A549 (cell line): ENCODE measurements at regions of chr15 and their contacts with region 1.

Region 1: GRCh38 chr15:84929744-84930371 is 45.4 kb downstream of the SLC28A1 start:
- DNase-seq: peak; percentile 71 to 95
- ATAC-seq: peak; percentile 67 to 76
- H3K4me3 ChIP-seq: no peak overlapping the region
- H3K27ac ChIP-seq: peak overlapping the region; percentile 54 to 85
- H3K4me1 ChIP-seq: peaks cover 46% of the 10 kb centered on the region
- CTCF ChIP-seq: no peak
- EP300 ChIP-seq: no peak
- POLR2A ChIP-seq: no peak
- RAD21 ChIP-seq: no peak

Region 2: DNA sequence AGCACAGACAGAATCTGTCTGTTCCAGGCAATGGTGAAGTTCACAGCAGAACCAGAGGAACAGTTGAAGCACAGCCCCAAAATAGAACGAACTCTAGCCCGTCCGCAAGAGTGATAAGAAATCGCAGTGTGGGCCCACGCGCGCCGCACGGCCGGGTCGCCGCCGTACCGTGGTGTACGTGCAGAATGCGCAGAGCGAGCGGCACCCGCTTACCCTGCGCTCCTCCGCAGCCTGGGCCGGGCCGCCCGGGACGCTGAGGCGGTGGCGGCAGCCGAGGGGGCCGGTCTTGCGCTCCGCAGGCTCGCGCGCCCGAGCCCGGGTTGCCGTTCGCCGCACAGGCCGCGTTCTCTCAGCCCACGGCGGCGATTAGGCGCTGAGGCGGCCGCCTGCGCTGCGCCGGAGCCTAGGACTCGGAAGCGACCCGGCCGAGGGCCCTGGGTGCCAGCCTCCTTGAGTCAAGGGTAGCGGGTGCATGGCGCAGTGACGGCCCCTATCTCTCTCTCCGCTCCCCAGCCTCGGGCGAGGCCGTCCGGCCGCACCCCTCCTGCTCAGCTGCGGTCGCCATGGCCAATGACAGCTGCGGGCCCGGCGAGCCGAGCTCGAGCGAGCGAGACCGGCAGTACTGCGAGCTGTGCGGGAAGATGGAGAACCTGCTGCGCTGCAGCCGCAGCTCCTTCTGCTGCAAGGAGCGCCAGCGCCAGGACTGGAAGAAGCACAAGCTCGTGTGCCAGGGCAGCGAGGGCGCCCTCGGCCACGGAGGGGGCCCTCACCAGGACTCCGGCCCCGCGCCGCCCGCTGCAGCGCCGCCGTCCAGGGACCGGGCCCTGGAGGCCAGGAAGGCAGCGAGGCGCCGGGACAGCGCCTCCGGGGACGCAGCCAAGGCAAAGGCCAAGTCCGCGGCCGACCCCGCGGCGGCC is 296.3 kb before region 1 on chr15:
- CTCF ChIA-PET with region 1: interaction called, 12 read pairs
- POLR2A ChIA-PET with region 1: no interaction called
- DNase-seq: peak in 1 of 2 experiments; percentile 78
- ATAC-seq: peak; percentile 72 to 77
- H3K4me3 ChIP-seq: peak overlapping the region; percentile 51
- H3K27ac ChIP-seq: peak overlapping the region; percentile 63 to 87
- H3K4me1 ChIP-seq: peaks cover 24% of the 10 kb centered on the region; the same call in 2 of the 3 replicates
- CTCF ChIP-seq: peak; percentile 31; the same call in 2 of the 3 replicates
- EP300 ChIP-seq: no peak
- POLR2A ChIP-seq: peak; percentile 35
- RAD21 ChIP-seq: no peak; a peak in 2 of 5 replicates

Region 3: GRCh38 chr15:84716036-84716799 is 213.6 kb before region 1 on chr15 and contains the start of gene SEC11A:
- CTCF ChIA-PET with region 1: interaction called, 12 read pairs
- POLR2A ChIA-PET with region 1: interaction called, 6 read pairs
- DNase-seq: peak; percentile 98 to 100
- ATAC-seq: peak; percentile 98 to 99
- H3K4me3 ChIP-seq: peak within 1 kb of the TSS; percentile 91
- H3K27ac ChIP-seq: peak within 1 kb of the TSS; percentile 91 to 99
- H3K4me1 ChIP-seq: peaks cover 19% of the 10 kb centered on the region
- CTCF ChIP-seq: no peak
- EP300 ChIP-seq: no peak
- POLR2A ChIP-seq: peak; percentile 94
- RAD21 ChIP-seq: no peak; a peak in 2 of 5 replicates
- polyA plus RNA-seq, gene SEC11A: 237 and 490 TPM in 2 replicates

Region 4: DNA sequence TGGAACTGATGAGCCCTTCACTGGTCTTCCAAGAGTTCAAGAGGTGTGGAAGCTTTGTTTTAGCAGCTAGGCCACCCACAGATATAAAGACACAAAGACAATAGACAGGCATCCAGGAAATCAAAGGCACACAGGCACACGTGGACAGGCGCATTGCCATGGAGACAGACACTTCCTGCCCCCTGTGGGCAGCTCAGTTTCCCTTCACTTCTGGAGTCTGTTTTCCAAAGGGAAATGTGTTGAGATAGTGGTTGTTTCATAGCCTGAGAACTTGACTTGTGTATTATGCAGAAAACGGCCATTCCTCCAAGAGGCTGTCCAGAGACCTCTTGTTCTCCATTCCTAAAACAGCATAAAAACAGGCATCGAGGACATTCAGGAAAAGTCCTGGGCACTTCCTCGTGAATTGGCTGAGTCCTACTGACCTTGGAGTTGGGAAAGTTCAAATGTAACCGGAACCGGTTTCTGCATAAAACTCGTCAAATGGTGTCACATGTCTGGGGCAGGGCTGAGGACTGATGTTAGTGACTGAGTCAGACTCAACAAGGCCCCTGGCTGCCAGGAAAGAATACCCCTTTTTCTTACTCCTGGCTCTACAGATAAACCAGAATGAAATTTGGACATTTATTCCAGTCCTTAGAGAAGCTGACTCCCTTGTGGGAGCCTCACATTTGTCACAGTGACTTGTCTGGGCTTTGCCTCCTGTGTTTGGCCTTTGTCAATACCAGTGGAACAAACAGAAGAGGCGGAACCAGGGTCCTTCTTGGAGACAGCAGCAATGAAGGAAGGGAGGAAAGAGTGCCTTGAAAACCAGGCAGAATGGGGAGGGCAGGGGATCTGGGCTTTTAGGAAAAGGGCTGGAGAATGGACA is 111.4 kb before region 1 on chr15:
- CTCF ChIA-PET with region 1: interaction called, 14 read pairs
- POLR2A ChIA-PET with region 1: no interaction called
- DNase-seq: peak in 1 of 2 experiments; percentile 43
- ATAC-seq: peak in 1 of 2 experiments; percentile 23; a peak in 3 of 6 replicates
- H3K4me3 ChIP-seq: no peak overlapping the region
- H3K27ac ChIP-seq: peak overlapping the region in 1 of 2 experiments; percentile 46; a peak in 3 of 6 replicates
- H3K4me1 ChIP-seq: peaks cover 19% of the 10 kb centered on the region
- CTCF ChIP-seq: no peak
- EP300 ChIP-seq: no peak
- POLR2A ChIP-seq: no peak
- RAD21 ChIP-seq: no peak

Region 5: DNA sequence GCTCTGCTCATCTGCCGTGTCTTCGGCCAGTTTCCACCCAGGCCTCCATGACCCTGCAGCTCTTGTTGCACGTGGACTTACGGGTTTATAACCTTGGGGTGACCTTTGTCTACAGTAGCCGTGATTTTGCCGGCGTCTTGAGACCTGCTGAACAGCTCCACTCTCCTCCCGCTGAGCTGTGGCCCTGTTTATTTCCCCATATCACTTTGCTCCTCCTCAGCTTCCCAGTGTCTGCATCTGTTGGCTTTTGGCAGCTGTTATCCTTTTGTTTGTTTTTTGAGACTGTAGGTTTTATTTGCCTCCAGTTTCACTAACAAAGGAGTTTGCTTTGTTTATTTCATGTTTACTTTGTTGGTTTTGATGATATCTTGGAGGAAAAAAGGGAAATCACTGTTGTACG is 74.7 kb before region 1 on chr15:
- CTCF ChIA-PET with region 1: interaction called, 11 read pairs
- POLR2A ChIA-PET with region 1: no interaction called
- DNase-seq: peak in 1 of 2 experiments; percentile 11
- ATAC-seq: no peak; a peak in 1 of 6 replicates
- H3K4me3 ChIP-seq: no peak overlapping the region
- H3K27ac ChIP-seq: no peak overlapping the region
- H3K4me1 ChIP-seq: peaks cover 12% of the 10 kb centered on the region; the same call in 1 of the 3 replicates
- CTCF ChIP-seq: no peak
- EP300 ChIP-seq: no peak
- POLR2A ChIP-seq: no peak
- RAD21 ChIP-seq: no peak

Region 6: DNA sequence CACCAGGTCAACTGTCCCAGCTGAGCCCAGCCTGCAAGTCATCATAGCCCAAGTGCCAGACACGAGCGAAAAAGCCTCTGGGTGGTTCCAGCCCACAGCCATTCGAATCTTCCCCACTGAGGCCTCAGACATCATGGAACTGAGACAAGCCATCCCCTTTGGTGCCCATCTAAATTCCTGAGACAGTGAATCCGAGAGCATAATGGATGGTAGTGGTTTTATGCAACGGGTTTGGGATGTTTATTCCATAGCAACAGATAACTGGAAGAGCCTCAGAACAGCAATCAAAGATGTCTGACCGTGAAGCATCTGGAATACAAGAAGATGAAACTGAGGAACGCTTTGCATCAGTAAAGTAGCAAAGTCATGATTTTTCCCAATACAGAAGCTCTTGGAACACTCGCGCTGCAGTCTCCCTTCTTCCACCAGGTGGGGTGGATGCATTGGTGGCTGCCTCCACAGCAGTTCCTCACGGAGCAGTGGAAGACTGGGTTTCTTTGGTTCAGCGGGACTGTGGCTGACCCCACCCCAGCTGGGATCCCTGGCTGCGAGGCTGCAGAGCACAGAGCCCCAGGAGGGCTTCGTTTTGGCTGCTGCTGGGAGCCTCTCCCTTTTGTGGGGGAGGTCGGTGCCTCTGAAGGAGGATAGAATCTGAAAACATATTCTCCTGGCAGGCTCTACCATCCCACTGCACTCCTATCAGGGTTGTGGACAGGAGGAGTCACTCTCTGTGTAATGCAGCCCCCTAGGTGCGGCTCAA is 25.4 kb after region 1 on chr15:
- CTCF ChIA-PET with region 1: interaction called, 13 read pairs
- POLR2A ChIA-PET with region 1: no interaction called
- DNase-seq: peak; percentile 89 to 92
- ATAC-seq: peak; percentile 99
- H3K4me3 ChIP-seq: peak overlapping the region; percentile 34
- H3K27ac ChIP-seq: peak overlapping the region; percentile 87 to 90
- H3K4me1 ChIP-seq: peaks cover 13% of the 10 kb centered on the region
- CTCF ChIP-seq: peak; percentile 90
- EP300 ChIP-seq: no peak
- POLR2A ChIP-seq: no peak
- RAD21 ChIP-seq: peak; percentile 95